Mammary epithelial cell (primary cell): ENCODE measurements at regions of chr15 and their contacts with region 1.

Region 1: GRCh38 chr15:75639709-75640482 is at the start of gene IMP3:
- DNase-seq: peak; percentile 96
- H3K4me3 ChIP-seq: peak within 1 kb of the TSS; percentile 83 to 97 (median 95)
- H3K27ac ChIP-seq: peak within 1 kb of the TSS; percentile 72
- H3K4me1 ChIP-seq: peaks cover 16% of the 10 kb centered on the region
- H3K27me3 ChIP-seq: no peaks in the 10 kb centered on the region
- CTCF ChIP-seq: no peak
- total RNA-seq, gene IMP3: 46.5 to 62.8 TPM

Region 2: GRCh38 chr15:75367913-75368688 is 271.8 kb before region 1 on chr15 and contains the start of gene MAN2C1:
- CTCF ChIA-PET with region 1: interaction called, 9 read pairs
- dilution Hi-C with region 1: no loop called
- in situ Hi-C with region 1: no loop called
- intact Hi-C with region 1: loop called (anchors 1 kb)
- DNase-seq: peak; percentile 96
- H3K4me3 ChIP-seq: peak within 1 kb of the TSS; percentile 64 to 79 (median 76)
- H3K27ac ChIP-seq: peak within 1 kb of the TSS; percentile 83
- H3K4me1 ChIP-seq: peaks cover 42% of the 10 kb centered on the region
- H3K27me3 ChIP-seq: no peaks in the 10 kb centered on the region
- CTCF ChIP-seq: peak; percentile 70 to 85
- total RNA-seq, gene MAN2C1: 78.2 to 156 TPM

Region 3: DNA sequence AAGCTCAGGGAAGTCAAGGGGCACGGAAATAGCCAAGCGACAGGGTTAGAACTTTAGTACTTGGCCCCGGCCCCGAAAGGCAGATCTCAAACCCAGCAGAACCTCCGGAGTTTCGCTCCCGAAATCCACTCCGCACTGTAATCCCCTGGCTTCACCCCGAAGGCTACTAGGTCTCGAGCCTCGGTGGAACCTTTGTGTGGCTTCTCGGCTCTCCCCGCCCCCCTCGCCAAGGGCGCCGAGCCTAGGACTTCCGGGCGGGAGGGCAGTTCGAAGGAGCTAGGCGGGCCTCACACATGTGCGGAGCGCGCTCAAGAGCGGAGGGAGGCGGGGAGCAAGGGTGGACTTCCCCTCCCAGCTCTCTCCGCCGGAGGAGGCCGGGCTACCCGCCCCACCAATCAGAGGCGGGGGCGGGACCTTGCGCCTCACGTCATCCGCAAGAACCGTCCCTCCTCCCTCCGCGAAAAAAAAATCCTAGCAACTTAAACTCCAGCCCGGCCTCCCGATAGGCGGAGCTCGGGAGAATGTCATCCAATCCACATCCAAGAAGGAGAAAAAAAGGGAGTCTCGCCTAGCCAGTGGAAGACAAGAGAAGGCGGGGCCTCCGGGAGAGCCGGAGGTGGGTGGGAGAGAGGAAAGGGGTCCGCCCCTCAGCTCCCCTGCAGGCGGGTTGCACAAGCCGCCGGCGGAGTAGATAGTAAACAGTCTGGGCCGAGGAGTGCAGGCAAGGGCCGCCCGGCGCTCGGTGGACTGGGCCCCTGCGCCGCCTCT is 186.0 kb before region 1 on chr15:
- CTCF ChIA-PET with region 1: interaction called, 10 read pairs
- dilution Hi-C with region 1: no loop called
- in situ Hi-C with region 1: no loop called
- intact Hi-C with region 1: loop called (anchors 2 kb)
- DNase-seq: peak; percentile 100
- H3K4me3 ChIP-seq: peak overlapping the region; percentile 80 to 96 (median 91)
- H3K27ac ChIP-seq: peak overlapping the region; percentile 87
- H3K4me1 ChIP-seq: peaks cover 31% of the 10 kb centered on the region
- H3K27me3 ChIP-seq: no peaks in the 10 kb centered on the region
- CTCF ChIP-seq: no peak

Region 4: GRCh38 chr15:75508840-75509532 is 130.9 kb before region 1 on chr15:
- CTCF ChIA-PET with region 1: no interaction called
- dilution Hi-C with region 1: no loop called
- in situ Hi-C with region 1: no loop called
- intact Hi-C with region 1: loop called (anchors 2 kb)
- DNase-seq: peak; percentile 13
- H3K4me3 ChIP-seq: no peak overlapping the region
- H3K27ac ChIP-seq: no peak overlapping the region
- H3K4me1 ChIP-seq: no peaks in the 10 kb centered on the region
- H3K27me3 ChIP-seq: no peaks in the 10 kb centered on the region
- CTCF ChIP-seq: peak; percentile 32 to 56

Region 5: GRCh38 chr15:75578948-75579920 is 60.7 kb before region 1 on chr15 and contains the start of gene PTPN9:
- CTCF ChIA-PET with region 1: no interaction called
- dilution Hi-C with region 1: no loop called
- in situ Hi-C with region 1: no loop called
- intact Hi-C with region 1: loop called (anchors 2 kb)
- DNase-seq: peak; percentile 39
- H3K4me3 ChIP-seq: peak within 1 kb of the TSS; percentile 72 to 94 (median 76)
- H3K27ac ChIP-seq: peak within 1 kb of the TSS; percentile 78
- H3K4me1 ChIP-seq: peaks cover 4% of the 10 kb centered on the region
- H3K27me3 ChIP-seq: no peaks in the 10 kb centered on the region
- CTCF ChIP-seq: peak in 1 of 2 donors; percentile 54
- total RNA-seq, gene PTPN9: 26.7 to 38.0 TPM

Region 6: GRCh38 chr15:75625542-75626347 is 14.2 kb before region 1 on chr15 and contains the start of gene SNUPN:
- CTCF ChIA-PET with region 1: no interaction called
- dilution Hi-C with region 1: no loop called
- in situ Hi-C with region 1: no loop called
- intact Hi-C with region 1: loop called (anchors 1 kb)
- DNase-seq: peak; percentile 87
- H3K4me3 ChIP-seq: peak within 1 kb of the TSS; percentile 65 to 100 (median 96)
- H3K27ac ChIP-seq: peak within 1 kb of the TSS; percentile 82
- H3K4me1 ChIP-seq: peaks cover 26% of the 10 kb centered on the region
- H3K27me3 ChIP-seq: no peaks in the 10 kb centered on the region
- CTCF ChIP-seq: no peak
- total RNA-seq, gene SNUPN: 16.5 to 21.5 TPM

Region 7: GRCh38 chr15:75675579-75676404 is 35.9 kb after region 1 on chr15:
- CTCF ChIA-PET with region 1: no interaction called
- dilution Hi-C with region 1: loop called (anchors 5 kb)
- in situ Hi-C with region 1: no loop called
- intact Hi-C with region 1: no loop called
- DNase-seq: no peak
- H3K4me3 ChIP-seq: no peak overlapping the region
- H3K27ac ChIP-seq: no peak overlapping the region
- H3K4me1 ChIP-seq: peaks cover 11% of the 10 kb centered on the region
- H3K27me3 ChIP-seq: no peaks in the 10 kb centered on the region
- CTCF ChIP-seq: no peak